ENCODE measurements at regions of chr1 and their contacts with region 1.

Region 1: DNA sequence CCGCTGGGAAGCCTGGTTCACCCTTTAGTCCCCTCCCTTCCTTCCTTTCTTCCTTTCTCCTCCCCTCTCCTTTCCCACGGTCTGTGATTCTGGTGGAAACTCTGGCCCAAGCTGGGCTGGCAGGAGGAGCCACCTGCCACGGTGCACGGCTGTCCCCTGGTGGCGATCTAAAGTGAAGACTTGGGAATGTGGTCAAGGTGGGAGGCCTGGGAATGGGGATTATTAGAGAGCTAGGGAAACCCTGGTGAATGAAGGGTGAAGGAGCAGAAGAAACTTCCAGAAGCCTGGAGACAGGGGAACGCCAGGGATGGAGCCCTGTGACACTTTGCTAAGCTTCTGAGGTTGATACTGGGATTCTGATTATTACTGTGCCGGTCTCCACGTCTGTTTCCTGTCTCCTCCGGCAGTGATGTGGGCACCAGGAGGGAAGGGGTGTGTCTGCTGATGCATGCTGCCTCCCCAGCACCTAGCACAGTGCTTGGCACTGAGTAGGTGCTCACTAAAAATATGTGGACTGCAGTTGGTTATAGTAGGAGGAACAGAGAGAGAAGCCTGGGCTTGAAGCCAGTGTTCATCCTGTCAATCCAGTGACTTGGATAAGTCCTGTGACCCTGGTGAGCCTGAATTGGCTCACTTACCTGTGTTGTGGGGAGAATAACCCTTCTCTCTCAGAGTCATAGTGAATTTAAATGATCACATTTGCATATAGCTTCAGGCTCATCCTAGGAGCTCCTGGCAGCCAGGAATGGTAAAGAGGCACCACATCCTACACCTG is 71.2 kb upstream of the NBPF3 start:
- DNase-seq: peak; percentile 47 to 74 (median 57)
- H3K4me3 ChIP-seq: no peak overlapping the region
- H3K4me3 Mint-ChIP-seq: peak overlapping the region in 2 of 7 donors; percentile 51 to 58
- H3K27ac ChIP-seq: no peak overlapping the region
- H3K27ac Mint-ChIP-seq: peak overlapping the region in 2 of 8 donors; percentile 43 to 58
- H3K4me1 ChIP-seq: peaks cover 8% of the 10 kb centered on the region
- H3K4me1 Mint-ChIP-seq: peaks cover 5 to 9% (median 5%) of the 10 kb centered on the region in 3 donors
- H3K27me3 ChIP-seq: no peaks in the 10 kb centered on the region
- H3K27me3 Mint-ChIP-seq: peaks cover 0 to 5% of the 10 kb centered on the region in 2 donors

Region 2: GRCh38 chr1:21216835-21217811 is 151.6 kb before region 1 on chr1:
- CTCF ChIA-PET with region 1: interaction called, 11 read pairs
- POLR2A ChIA-PET with region 1: no interaction called
- DNase-seq: peak; percentile 41 to 74 (median 44)
- H3K4me3 ChIP-seq: no peak overlapping the region
- H3K4me3 Mint-ChIP-seq: no peak overlapping the region
- H3K27ac ChIP-seq: no peak overlapping the region
- H3K27ac Mint-ChIP-seq: peak overlapping the region in 2 of 8 donors; percentile 17 to 35
- H3K4me1 ChIP-seq: no peaks in the 10 kb centered on the region
- H3K4me1 Mint-ChIP-seq: peaks cover 0 to 3% (median 0%) of the 10 kb centered on the region in 3 donors
- H3K27me3 ChIP-seq: no peaks in the 10 kb centered on the region
- H3K27me3 Mint-ChIP-seq: no peaks in the 10 kb centered on the region

Region 3: GRCh38 chr1:21238141-21238800 is 130.4 kb before region 1 on chr1:
- CTCF ChIA-PET with region 1: interaction called, 136 read pairs
- POLR2A ChIA-PET with region 1: no interaction called
- DNase-seq: no peak
- H3K4me3 ChIP-seq: no peak overlapping the region
- H3K4me3 Mint-ChIP-seq: no peak overlapping the region
- H3K27ac ChIP-seq: no peak overlapping the region
- H3K27ac Mint-ChIP-seq: peak overlapping the region in 3 of 8 donors; percentile 8 to 50 (median 29)
- H3K4me1 ChIP-seq: no peaks in the 10 kb centered on the region
- H3K4me1 Mint-ChIP-seq: no peaks in the 10 kb centered on the region
- H3K27me3 ChIP-seq: no peaks in the 10 kb centered on the region
- H3K27me3 Mint-ChIP-seq: no peaks in the 10 kb centered on the region

Region 4: DNA sequence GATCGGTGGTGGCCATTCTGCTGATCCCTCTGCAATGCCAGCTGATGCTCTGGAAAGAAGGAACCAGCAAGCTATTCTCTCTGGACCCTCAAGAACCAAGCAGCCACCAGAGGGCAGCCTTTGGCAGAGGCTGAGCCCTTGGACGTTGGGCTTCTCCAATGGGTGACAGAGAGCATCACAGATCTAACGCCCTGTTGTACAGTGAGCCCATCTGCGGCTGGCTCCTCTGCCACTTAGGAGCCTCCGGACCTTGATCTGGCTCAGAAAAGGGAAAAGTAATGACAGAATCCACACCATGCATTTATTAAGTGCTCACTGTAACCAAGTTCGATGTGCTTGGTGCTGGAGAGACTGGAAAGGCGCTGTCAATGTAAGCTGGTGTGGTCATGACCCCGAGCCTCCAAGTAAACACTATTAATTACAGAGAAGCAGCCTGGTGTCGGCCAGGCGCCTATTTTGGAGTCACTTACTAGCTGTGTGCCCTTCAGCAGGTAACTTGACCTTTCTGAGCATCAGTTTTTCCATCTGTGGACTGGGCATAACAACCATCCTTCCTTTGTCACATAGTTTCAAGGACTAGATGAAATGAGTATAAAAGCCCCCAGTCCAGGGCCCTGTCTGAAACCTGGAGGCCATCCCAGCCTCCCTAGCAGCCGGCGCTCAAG is 113.3 kb before region 1 on chr1:
- CTCF ChIA-PET with region 1: interaction called, 253 read pairs
- POLR2A ChIA-PET with region 1: interaction called, 8 read pairs
- DNase-seq: peak; percentile 69 to 89 (median 73)
- H3K4me3 ChIP-seq: no peak overlapping the region
- H3K4me3 Mint-ChIP-seq: peak overlapping the region in 1 of 7 donors; percentile 37
- H3K27ac ChIP-seq: no peak overlapping the region
- H3K27ac Mint-ChIP-seq: peak overlapping the region; percentile 4 to 89 (median 64)
- H3K4me1 ChIP-seq: peaks cover 20% of the 10 kb centered on the region
- H3K4me1 Mint-ChIP-seq: peaks cover 33 to 38% (median 33%) of the 10 kb centered on the region in 3 donors
- H3K27me3 ChIP-seq: no peaks in the 10 kb centered on the region
- H3K27me3 Mint-ChIP-seq: no peaks in the 10 kb centered on the region

Region 5: DNA sequence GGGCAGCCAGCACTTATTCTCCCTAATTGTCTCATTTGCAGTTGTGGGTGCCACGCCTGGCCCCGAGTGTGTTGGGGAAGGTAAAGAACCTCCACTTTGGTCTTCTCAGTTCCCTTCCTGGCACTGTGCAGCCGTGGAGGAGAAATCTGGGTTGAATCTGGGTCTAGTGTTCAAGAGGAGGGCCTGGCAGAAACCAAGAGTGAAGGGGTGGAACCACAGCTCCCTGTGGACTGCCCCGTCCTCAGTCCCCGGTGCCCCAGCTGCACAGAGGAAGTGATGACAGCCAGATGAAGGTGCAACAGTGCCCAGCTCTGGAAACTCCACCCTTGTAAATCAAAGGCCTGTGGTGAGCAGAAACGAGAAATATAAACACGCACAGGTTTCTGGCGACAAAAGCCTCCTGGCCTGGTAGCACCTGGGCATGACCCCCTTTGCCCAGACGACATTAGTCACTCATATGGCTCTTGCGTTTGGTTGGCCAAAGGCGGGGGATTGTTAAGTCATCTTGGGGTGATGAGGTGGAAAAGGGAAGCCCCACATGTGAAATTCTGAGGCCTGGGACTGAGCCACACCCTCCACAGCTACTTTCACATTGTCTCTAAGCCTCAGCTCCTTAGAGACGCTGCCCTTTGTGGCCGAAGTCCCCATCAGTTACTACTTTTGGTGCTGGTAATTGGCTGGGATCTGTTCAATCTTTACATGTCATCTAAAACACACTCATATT is 74.3 kb before region 1 on chr1:
- CTCF ChIA-PET with region 1: interaction called, 13 read pairs
- POLR2A ChIA-PET with region 1: no interaction called
- DNase-seq: peak; percentile 77 to 97 (median 90)
- H3K4me3 ChIP-seq: peak overlapping the region; percentile 78
- H3K4me3 Mint-ChIP-seq: peak overlapping the region; percentile 86 to 97 (median 92)
- H3K27ac ChIP-seq: peak overlapping the region; percentile 77
- H3K27ac Mint-ChIP-seq: peak overlapping the region; percentile 97 to 100 (median 99)
- H3K4me1 ChIP-seq: peaks cover 82% of the 10 kb centered on the region
- H3K4me1 Mint-ChIP-seq: peaks cover 71 to 90% (median 90%) of the 10 kb centered on the region in 3 donors
- H3K27me3 ChIP-seq: no peaks in the 10 kb centered on the region
- H3K27me3 Mint-ChIP-seq: peaks cover 0 to 2% of the 10 kb centered on the region in 2 donors

Region 6: DNA sequence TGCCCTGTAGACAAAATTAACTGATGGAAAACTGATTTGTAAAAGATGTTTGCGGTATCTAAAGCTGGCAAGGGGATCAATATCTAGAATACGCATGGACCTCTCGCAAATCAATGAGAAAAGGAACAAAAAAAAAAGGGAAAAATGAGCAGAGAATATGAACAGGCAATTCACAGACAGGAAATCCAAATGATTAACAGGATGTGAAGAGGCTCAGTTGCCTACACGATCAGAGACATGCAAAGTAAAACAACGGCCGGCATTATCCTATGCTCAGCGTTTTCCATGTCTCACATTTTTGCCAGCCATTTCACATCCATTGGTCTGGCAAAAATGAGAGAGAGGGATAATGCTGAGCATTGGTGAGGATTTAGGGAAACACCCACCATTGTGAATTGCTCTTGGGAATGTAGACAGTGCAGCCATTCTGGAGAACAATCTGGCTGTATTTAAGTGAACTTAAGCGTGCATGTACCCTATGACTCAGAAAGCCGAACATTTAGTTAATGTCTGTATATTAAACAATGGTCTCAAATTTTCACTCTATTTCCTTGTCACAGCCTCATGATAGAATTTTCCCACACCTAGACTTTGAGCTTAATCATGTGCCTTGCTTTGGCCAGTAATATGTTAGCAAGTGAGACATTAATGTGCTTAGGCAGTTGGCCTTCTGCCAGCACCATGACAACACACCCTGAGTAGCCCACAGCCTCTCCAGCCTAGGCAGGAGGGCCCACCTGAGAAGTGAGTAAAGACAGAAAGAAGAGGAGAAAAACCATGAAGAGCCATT is 10.2 kb after region 1 on chr1:
- CTCF ChIA-PET with region 1: interaction called, 13 read pairs
- POLR2A ChIA-PET with region 1: no interaction called
- DNase-seq: no peak
- H3K4me3 ChIP-seq: no peak overlapping the region
- H3K4me3 Mint-ChIP-seq: no peak overlapping the region
- H3K27ac ChIP-seq: no peak overlapping the region
- H3K27ac Mint-ChIP-seq: no peak overlapping the region
- H3K4me1 ChIP-seq: no peaks in the 10 kb centered on the region
- H3K4me1 Mint-ChIP-seq: peaks cover 0 to 7% (median 3%) of the 10 kb centered on the region in 3 donors
- H3K27me3 ChIP-seq: no peaks in the 10 kb centered on the region
- H3K27me3 Mint-ChIP-seq: peaks cover 5 to 11% of the 10 kb centered on the region in 2 donors

Region 7: DNA sequence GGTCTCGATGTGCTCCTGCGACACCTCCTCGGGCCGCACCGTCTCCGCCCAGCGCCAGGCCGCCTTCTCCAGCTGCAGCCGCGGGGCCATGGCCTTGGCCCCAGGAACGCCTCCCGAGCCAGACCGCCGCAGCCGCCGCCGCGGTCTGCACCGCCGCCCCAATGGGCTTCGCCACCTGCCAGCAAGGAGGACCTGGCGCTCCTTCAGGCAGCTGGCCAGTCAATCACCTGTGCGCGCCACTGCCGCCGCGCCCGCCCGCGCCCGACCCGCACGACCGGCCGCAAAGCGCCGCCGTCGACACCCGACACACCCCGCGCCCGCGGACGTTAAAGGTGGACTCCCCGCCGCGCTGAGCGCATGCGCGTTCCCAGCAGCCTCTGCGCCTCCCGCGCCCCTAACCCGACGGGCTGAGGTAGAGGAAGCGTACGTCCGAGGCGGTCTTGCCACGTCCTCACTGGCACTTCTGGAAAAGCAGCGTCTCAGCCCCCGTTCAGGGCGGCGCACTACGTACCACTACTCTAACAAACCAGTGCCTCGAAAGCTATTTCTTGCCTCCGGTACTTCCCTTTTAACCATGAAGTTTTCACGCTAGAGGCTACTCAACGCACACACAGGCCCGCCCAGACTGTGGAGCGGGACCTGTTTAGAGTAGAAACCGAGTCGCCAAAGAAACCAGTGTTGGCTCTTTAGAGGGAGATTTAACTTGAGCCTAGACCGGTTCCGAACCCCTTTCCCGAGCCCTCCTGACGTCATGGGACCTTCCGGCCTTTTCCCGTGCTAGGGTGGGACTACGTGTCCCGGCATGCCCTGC is 414.4 kb after region 1 on chr1 and contains the start of gene USP48:
- CTCF ChIA-PET with region 1: no interaction called
- POLR2A ChIA-PET with region 1: no interaction called
- DNase-seq: peak; percentile 94 to 98 (median 97)
- H3K4me3 ChIP-seq: peak within 1 kb of the TSS; percentile 99
- H3K4me3 Mint-ChIP-seq: peak within 1 kb of the TSS; percentile 91 to 99 (median 98)
- H3K27ac ChIP-seq: peak within 1 kb of the TSS; percentile 100
- H3K27ac Mint-ChIP-seq: peak within 1 kb of the TSS; percentile 100
- H3K4me1 ChIP-seq: peaks cover 27% of the 10 kb centered on the region
- H3K4me1 Mint-ChIP-seq: peaks cover 25 to 41% (median 36%) of the 10 kb centered on the region in 3 donors
- H3K27me3 ChIP-seq: no peaks in the 10 kb centered on the region
- H3K27me3 Mint-ChIP-seq: peaks cover 0 to 7% of the 10 kb centered on the region in 2 donors
- total RNA-seq, gene USP48: 60.6 to 61.5 TPM

Measured in CD8-positive, alpha-beta memory T cell (primary cell).